Activated CD4-positive, alpha-beta memory T cell treated with anti-CD3 and anti-CD28 coated beads for 36 hours (primary cell): ENCODE measurements at regions of chr10 and their contacts with region 1.

Region 1: DNA sequence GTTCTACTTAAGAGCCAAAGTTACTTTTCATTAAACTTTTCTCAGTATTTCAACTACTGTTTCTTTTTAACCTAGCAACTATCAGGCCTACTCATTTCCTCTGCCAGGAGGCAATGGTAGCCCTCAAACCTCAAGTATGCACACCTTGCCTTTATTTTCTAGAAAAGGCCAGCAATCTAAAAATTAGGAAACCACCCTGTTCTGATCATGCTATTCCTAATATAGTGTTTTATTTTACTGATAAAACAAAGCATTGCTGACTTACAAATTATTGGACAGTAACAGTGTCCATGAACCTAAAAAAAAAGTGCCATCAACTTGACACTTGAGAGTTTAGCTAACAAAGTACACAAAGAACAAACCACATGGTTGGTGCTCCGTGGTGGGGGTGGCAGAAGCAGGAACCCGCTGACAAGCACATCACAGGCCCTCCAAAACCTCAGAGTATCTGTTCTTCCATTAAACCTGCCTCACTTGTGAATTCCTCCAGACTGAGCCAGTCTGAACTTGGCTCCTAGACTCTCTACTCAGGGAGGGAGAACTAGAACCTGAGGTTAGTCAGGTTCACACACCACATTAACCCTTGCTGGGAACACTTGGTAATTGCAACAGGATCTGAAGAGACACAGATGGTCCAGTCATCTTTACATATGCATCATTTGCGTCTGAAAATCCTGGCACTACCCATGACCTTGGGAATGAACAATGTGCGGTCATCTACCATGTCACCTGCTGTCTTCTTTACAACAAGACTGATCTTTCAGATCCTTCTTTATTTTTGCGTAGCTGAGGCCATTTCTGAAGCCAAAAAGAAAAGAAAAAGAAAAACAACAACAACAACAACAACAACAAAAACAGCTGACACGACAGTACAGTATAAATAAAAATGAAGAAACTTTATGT is 31.9 kb downstream of the PIP4K2A start:
- DNase-seq: peak; percentile 74
- H3K4me3 Mint-ChIP-seq: peak overlapping the region; percentile 66
- H3K27ac Mint-ChIP-seq: peak overlapping the region; percentile 99
- H3K4me1 Mint-ChIP-seq: peaks cover 87% of the 10 kb centered on the region
- H3K27me3 Mint-ChIP-seq: no peaks in the 10 kb centered on the region

Region 2: DNA sequence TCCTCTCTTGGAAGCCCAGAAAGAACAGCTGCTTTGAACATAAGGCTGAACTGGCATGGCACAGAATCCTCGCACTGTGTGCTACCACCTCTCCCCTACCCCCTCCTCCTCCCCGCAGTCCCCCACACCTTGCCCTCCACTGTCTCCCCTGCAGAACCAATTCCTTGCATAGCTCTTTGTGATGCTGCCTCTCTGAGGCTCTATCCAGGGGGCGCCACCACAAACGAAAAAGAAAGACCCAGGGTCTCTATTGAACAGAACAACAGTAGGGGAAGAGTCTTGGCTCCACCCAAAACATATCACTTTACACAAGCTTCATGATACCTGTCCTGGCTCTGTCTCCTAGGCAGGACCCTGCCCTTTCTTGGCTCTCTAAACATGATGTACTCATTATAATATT is 438.5 kb before region 1 on chr10:
- CTCF ChIA-PET with region 1: no interaction called
- POLR2A ChIA-PET with region 1: no interaction called
- intact Hi-C with region 1: loop called (anchors 10 kb)
- DNase-seq: peak; percentile 17
- H3K4me3 Mint-ChIP-seq: no peak overlapping the region
- H3K27ac Mint-ChIP-seq: no peak overlapping the region
- H3K4me1 Mint-ChIP-seq: peaks cover 39% of the 10 kb centered on the region
- H3K27me3 Mint-ChIP-seq: peaks cover 4% of the 10 kb centered on the region

Region 3: GRCh38 chr10:22369434-22370072 is 312.9 kb before region 1 on chr10:
- CTCF ChIA-PET with region 1: no interaction called
- POLR2A ChIA-PET with region 1: no interaction called
- intact Hi-C with region 1: loop called (anchors 10 kb)
- DNase-seq: no peak
- H3K4me3 Mint-ChIP-seq: no peak overlapping the region
- H3K27ac Mint-ChIP-seq: no peak overlapping the region
- H3K4me1 Mint-ChIP-seq: peaks cover 19% of the 10 kb centered on the region
- H3K27me3 Mint-ChIP-seq: peaks cover 4% of the 10 kb centered on the region

Region 4: DNA sequence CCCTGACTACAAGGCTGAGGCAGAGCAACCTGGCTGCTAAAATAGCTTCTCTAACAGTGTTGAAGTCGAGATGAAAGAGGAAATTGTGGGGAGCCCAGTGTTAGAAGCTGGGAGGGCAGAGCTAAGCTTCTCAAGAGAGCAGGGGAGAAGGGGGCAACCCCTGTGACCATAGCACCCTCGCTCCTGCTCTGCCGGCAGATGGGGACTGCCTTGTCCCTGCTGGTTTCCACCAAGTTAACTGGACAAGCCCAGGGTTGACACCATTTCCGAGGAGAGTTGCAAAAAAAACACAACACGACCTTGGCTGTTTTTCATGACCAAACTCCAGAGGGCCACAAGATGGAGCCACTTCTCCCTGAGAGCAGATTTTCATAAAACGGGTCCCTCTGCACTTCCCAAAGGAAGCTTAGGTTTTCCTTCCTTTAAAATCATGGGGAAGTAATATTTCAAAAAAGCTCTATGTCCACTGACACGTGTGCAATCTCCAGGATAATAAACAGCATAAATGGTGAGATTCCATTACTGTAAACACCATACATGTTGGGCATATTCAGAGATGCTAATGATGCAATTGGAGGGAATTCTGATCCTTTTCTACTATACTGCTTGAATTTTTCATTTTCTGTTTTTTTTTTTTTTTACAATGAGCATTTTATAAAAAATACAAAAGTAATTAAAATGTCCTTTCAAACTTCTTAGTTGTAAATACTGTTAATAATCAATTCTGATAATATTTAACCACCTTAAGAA is 108.5 kb before region 1 on chr10:
- CTCF ChIA-PET with region 1: interaction called, 8 read pairs
- POLR2A ChIA-PET with region 1: no interaction called
- intact Hi-C with region 1: loop called (anchors 1 kb)
- DNase-seq: peak; percentile 40
- H3K4me3 Mint-ChIP-seq: no peak overlapping the region
- H3K27ac Mint-ChIP-seq: peak overlapping the region; percentile 54
- H3K4me1 Mint-ChIP-seq: peaks cover 56% of the 10 kb centered on the region
- H3K27me3 Mint-ChIP-seq: no peaks in the 10 kb centered on the region

Region 5: GRCh38 chr10:22630234-22631174 is 52.0 kb before region 1 on chr10:
- CTCF ChIA-PET with region 1: interaction called, 8 read pairs
- POLR2A ChIA-PET with region 1: interaction called, 21 read pairs
- intact Hi-C with region 1: loop called (anchors 1 kb)
- DNase-seq: peak; percentile 64
- H3K4me3 Mint-ChIP-seq: peak overlapping the region; percentile 72
- H3K27ac Mint-ChIP-seq: peak overlapping the region; percentile 98
- H3K4me1 Mint-ChIP-seq: peaks cover 92% of the 10 kb centered on the region
- H3K27me3 Mint-ChIP-seq: no peaks in the 10 kb centered on the region

Region 6: GRCh38 chr10:22655311-22655981 is 27.0 kb before region 1 on chr10:
- CTCF ChIA-PET with region 1: interaction called, 5 read pairs
- POLR2A ChIA-PET with region 1: interaction called, 29 read pairs
- intact Hi-C with region 1: loop called (anchors 1 kb)
- DNase-seq: peak; percentile 63
- H3K4me3 Mint-ChIP-seq: peak overlapping the region; percentile 60
- H3K27ac Mint-ChIP-seq: peak overlapping the region; percentile 84
- H3K4me1 Mint-ChIP-seq: peaks cover 95% of the 10 kb centered on the region
- H3K27me3 Mint-ChIP-seq: no peaks in the 10 kb centered on the region

Region 7: DNA sequence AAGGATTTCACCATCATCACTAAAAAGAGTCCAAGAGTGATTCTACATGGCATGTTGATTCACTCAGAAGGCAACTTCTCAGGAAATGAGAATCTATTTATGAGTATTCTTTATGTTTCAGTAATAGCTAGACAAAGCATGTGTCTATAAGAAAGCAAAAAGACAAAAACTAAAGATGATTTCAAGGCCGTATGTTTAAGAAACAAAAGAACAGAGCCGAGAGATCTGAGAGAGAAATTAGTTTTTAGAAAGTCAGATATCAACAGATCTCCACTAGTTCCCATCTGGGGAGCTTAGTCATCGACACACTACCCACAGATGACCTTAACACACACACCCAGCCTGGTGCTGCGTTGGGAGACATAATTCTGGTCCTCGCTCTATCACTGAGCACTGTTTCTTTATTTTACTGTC is 10.9 kb after region 1 on chr10:
- CTCF ChIA-PET with region 1: no interaction called
- POLR2A ChIA-PET with region 1: interaction called, 30 read pairs
- intact Hi-C with region 1: loop called (anchors 1 kb)
- DNase-seq: peak; percentile 62
- H3K4me3 Mint-ChIP-seq: peak overlapping the region; percentile 55
- H3K27ac Mint-ChIP-seq: peak overlapping the region; percentile 95
- H3K4me1 Mint-ChIP-seq: peaks cover 93% of the 10 kb centered on the region
- H3K27me3 Mint-ChIP-seq: no peaks in the 10 kb centered on the region